Heart right ventricle (tissue), 16 donors: ENCODE measurements at regions of chr5 and their contacts with region 1.

Region 1: DNA sequence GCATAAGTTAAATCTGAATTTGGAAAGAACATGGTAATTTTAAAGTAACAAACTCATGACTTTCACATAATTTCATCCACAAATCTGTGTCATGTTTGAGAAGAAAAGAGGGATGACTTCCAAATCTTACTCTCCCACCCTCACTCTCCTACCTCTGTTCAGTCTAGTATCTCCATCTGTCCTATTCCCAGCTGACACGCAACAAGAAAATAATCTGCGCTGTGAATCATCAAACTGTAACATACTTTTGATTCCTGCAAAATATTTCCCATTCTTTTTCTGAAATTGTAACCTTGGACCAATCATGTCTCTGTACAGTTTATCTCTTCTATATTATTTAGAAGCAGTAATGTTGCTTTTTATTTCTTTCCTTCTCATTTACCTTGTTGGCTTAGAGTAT is 91.4 kb downstream of the SLC12A2 start:
- DNase-seq: no peak
- ATAC-seq: no peak
- H3K4me3 ChIP-seq: no peak overlapping the region
- H3K27ac ChIP-seq: no peak overlapping the region
- H3K4me1 ChIP-seq: no peaks in the 10 kb centered on the region
- H3K27me3 ChIP-seq: no peaks in the 10 kb centered on the region
- CTCF ChIP-seq: no peak

Region 2: GRCh38 chr5:128121655-128122054 is 53.3 kb before region 1 on chr5:
- intact Hi-C with region 1: loop called in 2 of 10 experiments (anchors 2 to 10 kb)
- DNase-seq: no peak
- ATAC-seq: no peak
- H3K4me3 ChIP-seq: no peak overlapping the region
- H3K27ac ChIP-seq: no peak overlapping the region
- H3K4me1 ChIP-seq: no peaks in the 10 kb centered on the region
- H3K27me3 ChIP-seq: no peaks in the 10 kb centered on the region
- CTCF ChIP-seq: no peak